Ascending aorta (tissue), 2 donors: ENCODE measurements at regions of chr1 and their contacts with region 1.

Region 1: DNA sequence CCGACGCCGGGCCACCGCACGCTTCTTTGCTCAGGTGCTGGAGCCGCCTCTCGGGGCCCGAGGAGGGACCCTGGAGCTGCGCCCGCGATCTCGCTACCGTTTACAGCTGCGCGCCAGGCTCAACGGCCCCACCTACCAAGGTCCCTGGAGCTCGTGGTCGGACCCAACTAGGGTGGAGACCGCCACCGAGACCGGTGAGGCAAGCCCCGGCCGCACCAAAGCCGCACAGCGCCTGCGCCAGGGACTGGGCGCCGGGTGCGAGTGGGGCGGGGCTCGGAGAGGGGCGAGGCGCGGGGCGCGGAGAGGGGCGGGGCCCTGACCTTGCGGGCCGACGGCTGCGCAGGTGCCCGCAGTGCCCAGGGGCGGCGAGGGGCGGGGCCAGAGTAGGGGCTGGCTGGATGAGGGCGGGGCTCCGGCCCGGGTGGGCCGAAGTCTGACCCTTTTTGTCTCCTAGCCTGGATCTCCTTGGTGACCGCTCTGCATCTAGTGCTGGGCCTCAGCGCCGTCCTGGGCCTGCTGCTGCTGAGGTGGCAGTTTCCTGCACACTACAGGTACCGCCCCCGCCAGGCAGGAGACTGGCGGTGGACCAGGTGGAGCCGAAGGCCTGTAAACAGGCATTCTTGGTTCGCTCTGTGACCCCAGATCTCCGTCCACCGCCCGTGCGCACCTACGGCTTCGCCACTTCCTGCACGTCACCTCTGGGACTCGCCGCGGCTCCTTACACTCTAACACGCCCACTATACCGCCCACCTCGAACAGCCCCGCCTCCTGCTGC is 9.8 kb upstream of the CDC20 start:
- DNase-seq: peak; percentile 55 to 92
- H3K4me3 ChIP-seq: peak overlapping the region; percentile 67 to 73
- H3K27ac ChIP-seq: peak overlapping the region; percentile 80 to 87
- H3K4me1 ChIP-seq: no peaks in the 10 kb centered on the region
- H3K27me3 ChIP-seq: no peaks in the 10 kb centered on the region
- CTCF ChIP-seq: no peak

Region 2: DNA sequence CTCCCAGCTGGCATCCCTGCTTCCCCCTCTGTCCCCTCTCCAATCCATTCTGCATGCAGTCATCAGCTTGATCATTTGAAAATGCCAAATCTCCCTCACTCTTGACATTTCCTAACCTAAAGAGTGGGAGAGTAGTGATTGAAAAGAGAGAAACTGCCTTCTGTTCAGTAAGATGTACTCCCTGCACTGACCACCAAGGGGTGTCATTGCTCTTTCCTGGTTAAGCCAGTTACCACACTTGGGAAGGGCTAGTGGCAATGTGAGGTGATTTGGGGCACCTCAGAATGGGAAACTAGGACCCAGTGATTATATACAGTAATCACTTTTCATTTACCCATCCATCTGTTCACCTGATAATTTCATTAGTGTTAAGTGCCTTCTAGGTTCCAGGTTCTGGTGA is 571.1 kb before region 1 on chr1:
- intact Hi-C with region 1: no loop called
- DNase-seq: no peak
- H3K4me3 ChIP-seq: no peak overlapping the region
- H3K27ac ChIP-seq: no peak overlapping the region
- H3K4me1 ChIP-seq: no peaks in the 10 kb centered on the region
- H3K27me3 ChIP-seq: no peaks in the 10 kb centered on the region
- CTCF ChIP-seq: peak; percentile 23 to 42 (median 35)

Region 3: DNA sequence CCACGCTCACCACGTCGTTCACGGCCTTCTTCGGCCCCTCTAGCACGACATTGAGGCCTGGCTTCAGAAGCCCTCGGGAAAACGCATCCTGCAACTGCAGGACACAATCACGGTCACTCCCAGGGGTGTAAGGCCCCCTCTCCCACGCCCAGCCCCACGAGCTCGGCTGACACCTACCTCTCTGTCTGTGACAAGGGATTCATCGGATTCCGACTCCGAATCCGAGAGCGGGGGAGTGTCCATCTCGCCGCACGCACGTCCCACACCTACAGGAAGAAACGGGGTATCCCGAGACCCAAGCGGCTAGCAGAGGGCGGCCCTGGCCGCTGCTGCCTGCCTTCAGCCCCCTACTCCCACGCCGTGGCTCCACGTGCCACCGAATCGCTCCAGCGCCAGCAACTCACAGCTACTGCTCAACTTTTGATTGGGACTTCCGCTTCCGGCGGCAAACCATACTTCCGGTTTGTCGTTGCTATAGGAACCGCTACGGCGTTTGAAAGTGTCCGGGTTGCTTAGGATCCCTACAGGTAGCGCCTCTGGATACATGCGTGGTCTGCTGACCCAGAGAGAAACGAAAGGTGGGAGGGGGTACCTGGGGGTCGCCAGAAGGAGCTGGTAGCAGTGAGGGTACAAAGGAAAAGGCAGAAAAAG is 177.0 kb before region 1 on chr1 and contains the starts of genes CFAP57 and EBNA1BP2:
- intact Hi-C with region 1: loop called (anchors 5 kb)
- DNase-seq: peak; percentile 76 to 96
- H3K4me3 ChIP-seq: peak within 1 kb of the TSS; percentile 69 to 92
- H3K27ac ChIP-seq: peak within 1 kb of the TSS; percentile 46 to 51
- H3K4me1 ChIP-seq: peaks cover 6 to 9% of the 10 kb centered on the region in 2 donors
- H3K27me3 ChIP-seq: no peaks in the 10 kb centered on the region
- CTCF ChIP-seq: no peak
- total RNA-seq, gene CFAP57: not detected
- total RNA-seq, gene EBNA1BP2: 22.1 TPM

Region 4: DNA sequence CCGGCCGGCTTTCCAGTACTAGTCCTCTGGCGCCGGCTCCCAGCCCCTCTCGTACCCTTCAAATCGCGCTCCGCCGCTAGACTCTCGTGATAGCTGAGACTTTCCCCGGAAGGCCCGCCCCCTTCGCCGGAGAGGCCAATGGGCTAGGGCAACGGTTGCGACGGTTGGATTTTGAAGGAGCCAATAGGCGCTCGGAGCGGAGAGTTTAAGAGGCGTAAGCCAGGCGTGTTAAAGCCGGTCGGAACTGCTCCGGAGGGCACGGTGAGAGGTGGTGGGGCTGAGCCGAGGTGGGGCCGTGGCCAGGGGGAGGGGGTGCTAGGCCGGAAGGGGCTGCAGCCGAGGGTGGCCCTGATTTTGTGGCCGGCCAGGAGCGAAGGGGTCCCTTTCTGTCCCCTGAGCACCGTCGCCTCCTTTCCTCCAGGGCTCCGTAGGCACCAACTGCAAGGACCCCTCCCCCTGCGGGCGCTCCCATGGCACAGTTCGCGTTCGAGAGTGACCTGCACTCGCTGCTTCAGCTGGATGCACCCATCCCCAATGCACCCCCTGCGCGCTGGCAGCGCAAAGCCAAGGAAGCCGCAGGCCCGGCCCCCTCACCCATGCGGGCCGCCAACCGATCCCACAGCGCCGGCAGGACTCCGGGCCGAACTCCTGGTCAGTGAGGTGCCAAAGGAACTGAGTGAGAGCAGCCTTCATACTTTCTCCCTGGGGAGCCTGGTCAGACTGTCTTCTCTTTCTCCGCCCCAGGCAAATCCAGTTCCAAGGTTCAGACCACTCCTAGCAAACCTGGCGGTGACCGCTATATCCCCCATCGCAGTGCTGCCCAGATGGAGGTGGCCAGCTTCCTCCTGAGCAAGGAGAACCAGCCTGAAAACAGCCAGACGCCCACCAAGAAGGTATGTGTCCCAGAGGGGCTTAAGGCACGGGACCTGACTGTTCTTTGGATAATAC is 10.0 kb after region 1 on chr1 and contains the start of gene CDC20:
- intact Hi-C with region 1: loop called (anchors 1 kb)
- DNase-seq: peak; percentile 96 to 100
- H3K4me3 ChIP-seq: peak within 1 kb of the TSS; percentile 63 to 67
- H3K27ac ChIP-seq: peak within 1 kb of the TSS; percentile 84 to 86
- H3K4me1 ChIP-seq: peaks cover 6 to 7% of the 10 kb centered on the region in 2 donors
- H3K27me3 ChIP-seq: no peaks in the 10 kb centered on the region
- CTCF ChIP-seq: no peak
- total RNA-seq, gene CDC20: not detected

Region 5: DNA sequence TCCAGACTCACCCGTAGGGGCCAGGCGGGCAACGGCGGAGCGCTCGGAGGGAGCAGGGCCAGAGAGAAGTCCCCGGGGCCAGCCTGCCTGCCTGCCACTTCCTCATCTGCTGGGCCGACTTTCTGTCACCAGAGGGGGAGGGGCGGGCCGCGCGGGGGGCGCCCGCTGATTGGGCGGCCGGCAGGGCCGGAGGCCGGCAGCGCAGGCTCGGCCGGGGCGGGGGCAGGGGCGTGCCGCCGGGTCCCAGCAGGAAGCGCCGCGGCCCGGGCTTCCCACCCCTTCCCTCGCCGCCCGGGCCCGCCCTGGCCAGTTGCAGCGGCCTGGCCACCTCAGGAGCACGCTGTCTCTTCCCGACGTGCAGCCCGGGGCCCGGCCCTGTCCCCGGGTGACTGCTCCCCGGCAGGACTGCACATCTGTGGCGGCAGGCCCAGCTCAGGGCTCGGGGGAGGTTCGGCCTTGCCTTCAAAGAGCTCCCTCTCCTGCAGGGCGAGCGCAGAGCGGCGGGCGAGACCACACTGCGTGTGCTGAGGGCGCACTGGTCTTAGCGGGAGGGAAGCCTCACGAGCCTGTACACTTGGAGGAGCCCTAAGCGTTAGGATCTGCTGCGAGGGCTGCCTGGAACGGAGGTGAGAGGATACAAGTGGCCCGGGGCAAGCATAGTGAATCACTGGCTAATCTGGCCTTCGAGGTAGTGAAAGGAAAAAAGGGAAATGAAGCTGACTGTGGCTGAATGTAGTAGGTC is 19.1 kb after region 1 on chr1 and contains the start of gene ELOVL1:
- intact Hi-C with region 1: loop called (anchors 1 kb)
- DNase-seq: peak; percentile 70 to 96
- H3K4me3 ChIP-seq: peak within 1 kb of the TSS; percentile 96 to 97
- H3K27ac ChIP-seq: peak within 1 kb of the TSS; percentile 96
- H3K4me1 ChIP-seq: peaks cover 12 to 22% of the 10 kb centered on the region in 2 donors
- H3K27me3 ChIP-seq: no peaks in the 10 kb centered on the region
- CTCF ChIP-seq: peak in 2 of 3 experiments; percentile 11 to 26
- total RNA-seq, gene ELOVL1: 39.9 TPM

Region 6: GRCh38 chr1:43389326-43390313 is 40.6 kb after region 1 on chr1 and contains the starts of genes MED8 and SZT2:
- intact Hi-C with region 1: loop called (anchors 2 kb)
- DNase-seq: peak; percentile 93 to 99
- H3K4me3 ChIP-seq: peak within 1 kb of the TSS; percentile 79 to 92
- H3K27ac ChIP-seq: peak within 1 kb of the TSS; percentile 86 to 90
- H3K4me1 ChIP-seq: peaks cover 18 to 25% of the 10 kb centered on the region in 2 donors
- H3K27me3 ChIP-seq: no peaks in the 10 kb centered on the region
- CTCF ChIP-seq: no peak
- total RNA-seq, gene MED8: 15.3 TPM
- total RNA-seq, gene SZT2: 35.9 TPM

Region 7: DNA sequence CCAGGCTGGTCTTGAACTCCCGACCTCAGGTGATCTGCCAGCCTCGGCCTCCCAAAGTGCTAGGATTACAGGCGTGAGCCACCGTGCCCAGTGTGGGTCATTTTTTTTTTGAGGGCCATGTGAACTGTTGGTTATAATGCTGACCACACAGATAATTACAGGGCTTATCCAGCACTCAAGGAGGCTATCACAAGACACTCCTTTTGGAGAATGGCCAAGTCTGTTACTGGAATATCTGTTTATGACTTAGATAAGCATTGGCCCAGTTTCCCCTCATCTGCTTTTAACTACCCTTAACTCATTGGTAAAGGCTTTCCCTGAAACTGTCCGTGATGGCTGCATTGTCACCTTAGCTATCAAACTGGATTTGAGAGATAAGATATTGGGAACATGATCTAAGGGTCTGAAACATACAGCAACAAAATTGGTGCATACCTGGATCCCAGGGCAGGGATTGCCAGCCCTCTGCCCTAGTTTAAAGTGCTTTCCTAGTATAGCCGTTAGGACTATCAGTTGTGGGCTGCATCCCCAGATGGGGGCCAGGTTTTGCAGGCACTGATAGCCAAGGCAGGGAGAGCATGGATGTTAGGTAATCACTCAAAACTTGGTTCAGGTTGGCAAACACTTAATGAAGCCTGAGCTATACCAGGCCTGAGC is 56.4 kb after region 1 on chr1:
- intact Hi-C with region 1: no loop called
- DNase-seq: no peak
- H3K4me3 ChIP-seq: no peak overlapping the region
- H3K27ac ChIP-seq: no peak overlapping the region
- H3K4me1 ChIP-seq: no peaks in the 10 kb centered on the region
- H3K27me3 ChIP-seq: no peaks in the 10 kb centered on the region
- CTCF ChIP-seq: no peak